Esophagus squamous epithelium (tissue), 5 donors: ENCODE measurements at regions of chr4 and their contacts with region 1.

Region 1: DNA sequence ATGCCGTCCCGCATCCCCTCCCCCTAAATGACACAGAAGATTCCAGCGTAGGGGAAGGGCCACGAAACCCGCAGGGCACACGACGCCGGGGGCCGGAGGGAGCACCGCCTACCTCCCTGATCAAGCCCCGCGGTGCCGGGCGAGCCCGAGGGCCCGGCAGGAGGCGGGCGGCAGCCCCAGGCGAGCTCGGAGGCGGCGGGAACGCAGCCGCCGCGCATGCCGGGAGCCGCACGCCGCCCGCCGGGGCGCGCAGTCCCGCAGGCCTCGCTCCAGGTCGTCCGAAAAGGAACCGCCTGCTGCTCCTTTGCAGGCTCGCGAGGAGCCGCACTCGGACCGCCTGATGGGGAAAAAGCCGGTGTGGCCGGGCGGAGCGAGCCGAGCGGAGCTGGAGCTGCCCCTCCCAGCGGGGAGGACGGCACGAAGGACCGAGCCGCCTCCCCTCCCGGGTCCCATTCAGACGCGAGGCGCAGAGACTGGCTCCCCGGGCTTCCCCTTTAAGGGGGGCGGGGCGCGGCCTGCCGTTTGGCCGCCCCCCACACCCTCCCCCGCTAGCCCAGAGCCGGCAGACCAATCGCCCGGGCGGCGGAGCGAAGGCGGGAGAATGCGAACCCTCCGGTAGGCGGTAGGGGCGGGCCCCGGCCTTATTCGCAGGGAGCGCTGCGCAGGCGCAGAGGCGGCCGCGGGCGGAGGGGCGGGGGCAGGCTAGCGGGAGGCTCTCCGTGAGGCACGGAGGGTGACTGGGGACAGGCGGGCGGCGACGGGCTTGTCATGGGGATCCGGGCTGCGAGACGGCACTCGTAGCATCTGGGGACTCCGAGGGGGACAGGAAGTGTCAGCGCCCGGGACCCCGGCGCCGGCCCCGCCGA is 561 bp upstream of the ING2 start:
- DNase-seq: peak; percentile 93
- H3K4me3 ChIP-seq: peak overlapping the region; percentile 86 to 92 (median 89)
- H3K27ac ChIP-seq: peak overlapping the region; percentile 96 to 99 (median 97)
- H3K4me1 ChIP-seq: peaks cover 0 to 39% (median 9%) of the 10 kb centered on the region in 3 donors
- H3K27me3 ChIP-seq: no peaks in the 10 kb centered on the region
- CTCF ChIP-seq: peak in 5 of 6 experiments; percentile 23 to 37 (median 33)
- POLR2A ChIP-seq: peak in 2 of 4 donors; percentile 45 to 87

Region 2: GRCh38 chr4:183321079-183321478 is 183.2 kb before region 1 on chr4:
- intact Hi-C with region 1: no loop called
- DNase-seq: no peak
- H3K4me3 ChIP-seq: no peak overlapping the region
- H3K27ac ChIP-seq: no peak overlapping the region
- H3K4me1 ChIP-seq: peaks cover 0 to 5% (median 0%) of the 10 kb centered on the region in 3 donors
- H3K27me3 ChIP-seq: peaks cover 0 to 14% (median 0%) of the 10 kb centered on the region in 4 donors
- CTCF ChIP-seq: no peak
- POLR2A ChIP-seq: no peak

Region 3: DNA sequence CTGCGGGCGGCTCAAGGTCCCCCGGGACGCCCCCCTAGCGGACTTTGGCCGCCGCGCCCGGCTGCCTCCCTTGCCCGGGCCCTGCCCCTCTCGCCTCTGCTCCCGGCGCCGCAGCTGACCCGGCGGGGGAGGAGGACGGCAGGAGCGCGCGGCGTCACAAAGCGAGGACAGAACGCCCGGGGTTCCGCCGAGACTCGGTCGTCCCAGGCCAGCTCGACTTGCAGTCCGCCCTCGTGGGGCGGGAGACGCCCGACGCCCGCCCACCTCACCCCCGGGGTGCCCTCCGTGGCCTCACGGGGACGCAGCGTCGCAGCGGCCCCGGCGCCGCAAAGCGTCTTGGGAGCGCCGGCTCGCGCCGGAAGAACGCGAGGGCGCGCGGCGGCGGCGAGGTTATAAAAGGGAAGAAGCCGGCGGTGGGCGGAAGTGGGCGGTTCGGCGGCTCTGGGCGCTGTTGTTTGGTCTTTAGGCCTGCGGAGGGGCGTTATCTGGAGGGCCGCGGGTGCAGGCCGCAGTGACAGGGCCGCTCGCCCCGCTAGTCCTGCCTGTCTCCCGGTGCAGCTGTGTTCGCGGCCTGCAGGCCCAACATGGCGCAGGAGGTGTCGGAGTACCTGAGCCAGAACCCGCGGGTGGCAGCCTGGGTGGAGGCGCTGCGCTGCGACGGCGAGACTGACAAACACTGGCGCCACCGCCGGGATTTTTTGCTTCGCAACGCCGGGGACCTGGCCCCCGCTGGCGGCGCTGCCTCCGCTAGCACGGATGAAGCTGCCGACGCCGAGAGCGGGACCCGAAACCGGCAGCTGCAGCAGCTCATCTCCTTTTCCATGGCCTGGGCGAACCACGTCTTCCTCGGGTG is 59.9 kb before region 1 on chr4 and contains the start of gene CDKN2AIP:
- intact Hi-C with region 1: loop called (anchors 2 kb)
- DNase-seq: peak; percentile 64
- H3K4me3 ChIP-seq: peak within 1 kb of the TSS; percentile 86 to 98 (median 96)
- H3K27ac ChIP-seq: peak within 1 kb of the TSS; percentile 97 to 99 (median 98)
- H3K4me1 ChIP-seq: peaks cover 6 to 70% (median 25%) of the 10 kb centered on the region in 3 donors
- H3K27me3 ChIP-seq: no peaks in the 10 kb centered on the region
- CTCF ChIP-seq: peak in 2 of 6 experiments; percentile 18 to 21
- POLR2A ChIP-seq: peak in 3 of 4 donors; percentile 80 to 98 (median 98)
- total RNA-seq, gene CDKN2AIP: 20.3 to 33.5 (median 27.2) TPM

Region 4: GRCh38 chr4:183552274-183553146 is 48.2 kb after region 1 on chr4:
- intact Hi-C with region 1: no loop called
- DNase-seq: no peak
- H3K4me3 ChIP-seq: no peak overlapping the region
- H3K27ac ChIP-seq: no peak overlapping the region
- H3K4me1 ChIP-seq: no peaks in the 10 kb centered on the region
- H3K27me3 ChIP-seq: peaks cover 0 to 11% (median 0%) of the 10 kb centered on the region in 4 donors
- CTCF ChIP-seq: no peak
- POLR2A ChIP-seq: no peak

Region 5: GRCh38 chr4:183602557-183603027 is 98.3 kb after region 1 on chr4:
- intact Hi-C with region 1: loop called (anchors 10 kb)
- DNase-seq: no peak
- H3K4me3 ChIP-seq: no peak overlapping the region
- H3K27ac ChIP-seq: peak overlapping the region in 1 of 4 donors; percentile 49
- H3K4me1 ChIP-seq: peaks cover 0 to 9% (median 8%) of the 10 kb centered on the region in 3 donors
- H3K27me3 ChIP-seq: peaks cover 0 to 5% (median 0%) of the 10 kb centered on the region in 4 donors
- CTCF ChIP-seq: peak in 4 of 6 experiments; percentile 31 to 48 (median 36)
- POLR2A ChIP-seq: no peak

Region 6: DNA sequence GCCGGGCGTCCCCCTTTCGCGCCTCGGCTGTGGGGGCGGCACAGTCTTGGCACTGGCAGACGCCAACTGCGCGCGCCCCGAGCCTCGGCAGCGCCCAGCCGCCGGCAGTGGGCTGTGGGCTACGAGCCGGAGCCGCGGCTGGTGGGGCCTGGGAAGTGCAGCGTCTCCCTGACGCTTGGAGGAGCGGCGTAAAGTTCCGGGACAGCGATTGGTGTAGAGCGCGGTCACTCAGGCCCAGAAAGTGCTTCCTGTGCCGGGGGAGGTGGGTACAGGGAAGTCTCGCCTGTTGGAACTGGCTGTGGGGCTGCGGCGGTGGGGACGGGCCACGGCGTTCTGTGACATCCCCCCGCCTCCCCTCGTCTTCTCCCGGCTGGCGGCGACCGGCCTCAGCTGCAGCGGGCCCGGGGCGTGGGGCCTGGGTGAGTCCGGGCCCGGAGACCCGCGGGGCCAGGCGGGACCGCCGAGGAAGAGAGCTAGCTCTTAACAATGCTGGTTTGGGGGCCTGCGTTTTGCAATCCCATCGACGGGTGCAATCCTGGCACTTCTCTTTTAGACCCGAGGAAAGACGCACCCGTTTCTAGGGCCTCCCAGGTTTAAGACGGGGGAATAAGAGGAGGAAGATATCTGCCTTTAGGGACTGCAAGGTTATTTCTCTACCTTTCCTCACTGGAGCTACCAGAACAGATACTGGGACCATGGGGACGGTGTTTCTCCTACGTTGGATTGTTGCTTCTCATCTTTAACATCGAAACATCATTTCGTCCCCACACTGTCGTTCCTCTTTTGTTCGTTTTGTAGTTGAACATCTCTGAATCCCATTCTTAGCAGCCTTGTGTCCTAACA is 155.0 kb after region 1 on chr4 and contains the starts of genes RWDD4 and TRAPPC11:
- intact Hi-C with region 1: loop called (anchors 5 kb)
- DNase-seq: peak; percentile 79
- H3K4me3 ChIP-seq: peak within 1 kb of the TSS; percentile 67 to 94 (median 73)
- H3K27ac ChIP-seq: peak within 1 kb of the TSS; percentile 92 to 97 (median 94)
- H3K4me1 ChIP-seq: peaks cover 8 to 37% (median 12%) of the 10 kb centered on the region in 3 donors
- H3K27me3 ChIP-seq: no peaks in the 10 kb centered on the region
- CTCF ChIP-seq: peak in 4 of 6 experiments; percentile 14 to 58 (median 44)
- POLR2A ChIP-seq: peak in 3 of 4 donors; percentile 57 to 96 (median 95)
- total RNA-seq, gene RWDD4: 15.1 to 33.9 (median 26.0) TPM
- total RNA-seq, gene TRAPPC11: 24.5 to 36.2 (median 34.6) TPM

Region 7: DNA sequence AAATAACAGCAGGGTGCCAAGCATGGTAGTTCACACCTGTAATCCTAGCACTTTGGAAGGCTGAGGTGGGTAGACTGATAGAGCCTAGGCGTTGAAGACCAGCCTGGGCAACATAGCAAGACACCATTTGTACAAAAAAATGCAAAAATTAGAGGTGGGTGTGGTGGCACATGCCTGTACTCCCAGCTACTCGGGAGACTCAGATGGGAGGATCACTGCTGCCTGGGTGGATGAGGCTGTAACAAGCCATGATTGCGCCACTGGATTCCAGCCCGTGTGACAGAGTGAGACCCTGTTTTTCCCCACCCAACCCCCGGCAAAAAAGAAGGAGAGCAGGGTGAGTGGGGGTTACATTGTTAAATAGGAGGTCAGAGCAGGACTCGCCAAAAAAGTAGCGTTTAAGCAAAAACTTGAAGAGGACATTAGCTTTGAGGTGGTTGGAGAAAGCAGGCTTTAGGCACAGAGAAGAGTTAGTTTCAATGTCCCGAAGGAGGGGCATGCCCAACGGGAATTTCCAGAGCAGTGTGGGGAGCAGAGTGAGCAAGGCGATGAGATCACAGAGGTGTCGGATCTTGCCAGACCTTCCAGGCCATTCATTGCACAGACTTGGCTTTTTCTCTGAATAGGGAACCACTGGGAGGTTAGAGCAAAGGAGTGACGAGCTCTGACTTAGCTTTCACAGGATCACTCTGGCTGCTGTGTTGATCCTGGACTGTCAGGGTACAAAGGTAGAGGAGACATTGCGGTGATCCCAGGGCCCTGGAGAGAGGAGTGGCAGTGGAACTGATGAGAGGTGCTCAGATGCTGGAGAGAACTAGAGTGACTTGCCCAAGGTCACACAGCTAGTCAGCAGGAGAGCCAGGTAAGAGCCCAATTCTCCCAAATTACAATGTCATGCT is 225.4 kb after region 1 on chr4:
- intact Hi-C with region 1: no loop called
- DNase-seq: no peak
- H3K4me3 ChIP-seq: no peak overlapping the region
- H3K27ac ChIP-seq: peak overlapping the region; percentile 31 to 64 (median 48)
- H3K4me1 ChIP-seq: peaks cover 0 to 18% (median 0%) of the 10 kb centered on the region in 3 donors
- H3K27me3 ChIP-seq: no peaks in the 10 kb centered on the region
- CTCF ChIP-seq: no peak
- POLR2A ChIP-seq: no peak